ENCODE measurements at regions of chr17 and their contacts with region 1.

Region 1: GRCh38 chr17:47840740-47841603 is at the start of gene SCRN2:
- DNase-seq: peak; percentile 78 to 88 (median 79)
- H3K4me3 ChIP-seq: peak within 1 kb of the TSS; percentile 88
- H3K4me3 Mint-ChIP-seq: peak within 1 kb of the TSS; percentile 89 to 97 (median 93)
- H3K27ac ChIP-seq: peak within 1 kb of the TSS; percentile 65
- H3K27ac Mint-ChIP-seq: peak within 1 kb of the TSS; percentile 53 to 95 (median 84)
- H3K4me1 ChIP-seq: peaks cover 33% of the 10 kb centered on the region
- H3K4me1 Mint-ChIP-seq: peaks cover 8 to 41% (median 29%) of the 10 kb centered on the region in 4 donors
- H3K27me3 ChIP-seq: peaks cover 18% of the 10 kb centered on the region
- H3K27me3 Mint-ChIP-seq: peaks cover 7 to 17% of the 10 kb centered on the region in 2 donors
- total RNA-seq, gene SCRN2: 26.4 to 30.5 TPM

Region 2: GRCh38 chr17:47776330-47777197 is 64.4 kb before region 1 on chr17:
- CTCF ChIA-PET with region 1: no interaction called
- POLR2A ChIA-PET with region 1: no interaction called
- intact Hi-C with region 1: loop called (anchors 2 kb)
- DNase-seq: peak; percentile 46 to 56 (median 48)
- H3K4me3 ChIP-seq: no peak overlapping the region
- H3K4me3 Mint-ChIP-seq: no peak overlapping the region
- H3K27ac ChIP-seq: no peak overlapping the region
- H3K27ac Mint-ChIP-seq: no peak overlapping the region
- H3K4me1 ChIP-seq: no peaks in the 10 kb centered on the region
- H3K4me1 Mint-ChIP-seq: peaks cover 0 to 5% (median 3%) of the 10 kb centered on the region in 4 donors
- H3K27me3 ChIP-seq: peaks cover 23% of the 10 kb centered on the region
- H3K27me3 Mint-ChIP-seq: peaks cover 33 to 35% of the 10 kb centered on the region in 2 donors

Region 3: DNA sequence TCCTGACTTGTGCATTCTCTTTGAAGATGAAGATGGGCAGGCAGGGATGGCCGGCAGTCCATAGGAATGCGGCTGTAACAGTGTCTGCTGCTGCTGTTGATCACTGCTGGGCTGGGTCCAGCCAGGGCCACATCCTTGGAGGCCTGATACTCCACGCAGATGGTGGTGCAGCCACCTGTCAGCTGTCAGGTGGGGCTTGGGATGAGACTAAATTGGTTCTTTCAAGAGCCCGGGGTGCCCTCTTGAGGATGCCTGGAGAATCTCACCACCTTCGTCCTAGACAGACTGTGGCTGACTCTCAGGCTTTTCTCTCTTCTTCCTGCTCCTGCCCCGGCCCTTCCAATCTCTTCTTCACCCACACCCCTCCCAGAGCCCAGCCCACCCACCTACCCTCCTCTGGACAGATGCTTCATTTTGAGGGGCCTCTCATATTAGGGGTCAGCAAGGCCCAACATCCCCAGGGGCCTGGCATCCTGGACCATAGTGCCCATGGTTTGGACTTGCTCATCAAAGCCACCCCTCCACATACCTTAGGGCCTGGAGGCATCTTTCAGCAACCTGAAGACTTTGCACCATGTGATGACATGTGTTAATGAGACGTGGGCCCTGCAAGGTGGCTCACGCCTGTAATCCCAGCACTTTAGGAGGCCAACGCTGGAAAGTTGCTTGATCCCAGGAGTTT is 38.5 kb before region 1 on chr17:
- CTCF ChIA-PET with region 1: no interaction called
- POLR2A ChIA-PET with region 1: no interaction called
- intact Hi-C with region 1: no loop called
- DNase-seq: peak; percentile 52 to 62 (median 57)
- H3K4me3 ChIP-seq: no peak overlapping the region
- H3K4me3 Mint-ChIP-seq: no peak overlapping the region
- H3K27ac ChIP-seq: no peak overlapping the region
- H3K27ac Mint-ChIP-seq: peak overlapping the region in 2 of 7 donors; percentile 56 to 57
- H3K4me1 ChIP-seq: no peaks in the 10 kb centered on the region
- H3K4me1 Mint-ChIP-seq: no peaks in the 10 kb centered on the region
- H3K27me3 ChIP-seq: no peaks in the 10 kb centered on the region
- H3K27me3 Mint-ChIP-seq: peaks cover 1 to 3% of the 10 kb centered on the region in 2 donors

Region 4: GRCh38 chr17:47882247-47882646 is 41.3 kb after region 1 on chr17:
- CTCF ChIA-PET with region 1: interaction called, 562 read pairs
- POLR2A ChIA-PET with region 1: interaction called, 19 read pairs
- intact Hi-C with region 1: no loop called
- DNase-seq: no peak
- H3K4me3 ChIP-seq: no peak overlapping the region
- H3K4me3 Mint-ChIP-seq: no peak overlapping the region
- H3K27ac ChIP-seq: no peak overlapping the region
- H3K27ac Mint-ChIP-seq: no peak overlapping the region
- H3K4me1 ChIP-seq: peaks cover 41% of the 10 kb centered on the region
- H3K4me1 Mint-ChIP-seq: peaks cover 23 to 36% (median 30%) of the 10 kb centered on the region in 4 donors
- H3K27me3 ChIP-seq: no peaks in the 10 kb centered on the region
- H3K27me3 Mint-ChIP-seq: peaks cover 3 to 11% of the 10 kb centered on the region in 2 donors

Region 5: GRCh38 chr17:47949136-47949759 is 108.3 kb after region 1 on chr17:
- CTCF ChIA-PET with region 1: interaction called, 8 read pairs
- POLR2A ChIA-PET with region 1: no interaction called
- intact Hi-C with region 1: loop called (anchors 1 kb)
- DNase-seq: peak; percentile 59 to 71 (median 63)
- H3K4me3 ChIP-seq: peak overlapping the region in 1 of 2 donors; percentile 51
- H3K4me3 Mint-ChIP-seq: peak overlapping the region; percentile 61 to 91 (median 74)
- H3K27ac ChIP-seq: peak overlapping the region; percentile 37
- H3K27ac Mint-ChIP-seq: peak overlapping the region; percentile 29 to 93 (median 69)
- H3K4me1 ChIP-seq: peaks cover 34% of the 10 kb centered on the region
- H3K4me1 Mint-ChIP-seq: peaks cover 21 to 36% (median 29%) of the 10 kb centered on the region in 4 donors
- H3K27me3 ChIP-seq: no peaks in the 10 kb centered on the region
- H3K27me3 Mint-ChIP-seq: no peaks in the 10 kb centered on the region

Region 6: DNA sequence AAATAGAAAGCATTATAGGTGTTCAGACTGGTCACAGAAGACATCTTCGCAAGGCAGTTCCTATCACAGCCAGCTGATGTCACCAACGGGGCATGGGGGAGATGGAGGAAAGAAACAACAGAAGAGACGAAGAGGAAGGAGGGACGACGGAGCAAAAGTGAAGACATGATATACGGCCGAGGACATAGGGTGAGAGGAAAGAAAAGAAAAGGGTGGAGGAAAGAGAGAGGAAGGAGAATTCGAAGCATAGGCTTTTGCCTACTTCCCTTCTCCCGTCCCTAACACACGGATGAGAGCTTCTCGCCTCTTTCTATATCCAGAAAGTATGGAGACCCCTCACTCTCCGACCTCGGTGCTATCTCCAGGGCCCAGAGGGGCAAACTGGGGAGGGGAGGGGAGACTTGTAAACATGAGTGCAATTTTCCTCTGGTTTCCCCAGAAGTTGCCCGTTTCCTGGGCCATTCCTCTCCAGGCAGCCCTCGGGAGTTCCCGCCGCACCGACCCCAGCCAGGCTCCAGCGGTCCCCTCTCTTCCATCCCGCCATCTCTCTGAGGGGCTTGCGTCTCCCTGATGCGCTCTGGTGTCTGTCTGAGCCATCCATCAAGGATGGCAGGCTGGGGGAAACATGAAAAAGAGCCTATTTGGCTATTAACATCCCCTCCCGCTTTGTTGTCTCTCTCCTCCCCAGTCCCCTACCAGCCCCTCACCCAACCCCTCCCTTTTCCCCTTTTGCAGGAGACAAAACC is 170.6 kb after region 1 on chr17:
- CTCF ChIA-PET with region 1: interaction called, 12 read pairs
- POLR2A ChIA-PET with region 1: no interaction called
- intact Hi-C with region 1: no loop called
- DNase-seq: peak; percentile 25 to 51 (median 42)
- H3K4me3 ChIP-seq: peak overlapping the region in 1 of 2 donors; percentile 36
- H3K4me3 Mint-ChIP-seq: peak overlapping the region; percentile 76 to 92 (median 84)
- H3K27ac ChIP-seq: no peak overlapping the region
- H3K27ac Mint-ChIP-seq: peak overlapping the region in 3 of 7 donors; percentile 11 to 85 (median 77)
- H3K4me1 ChIP-seq: peaks cover 8% of the 10 kb centered on the region
- H3K4me1 Mint-ChIP-seq: peaks cover 9 to 18% (median 14%) of the 10 kb centered on the region in 4 donors
- H3K27me3 ChIP-seq: peaks cover 11% of the 10 kb centered on the region
- H3K27me3 Mint-ChIP-seq: peaks cover 22 to 42% of the 10 kb centered on the region in 2 donors

Measured in CD4-positive, alpha-beta memory T cell (primary cell).